Testis (tissue), 5 donors: ENCODE measurements at regions of chr13 and their contacts with region 1.

Region 1: GRCh38 chr13:26929971-26930730 is 169.6 kb upstream of the GPR12 start:
- DNase-seq: peak; percentile 83
- H3K4me3 ChIP-seq: peak overlapping the region in 1 of 2 donors; percentile 14
- H3K27ac ChIP-seq: no peak overlapping the region
- H3K4me1 ChIP-seq: no peaks in the 10 kb centered on the region
- H3K27me3 ChIP-seq: no peaks in the 10 kb centered on the region
- CTCF ChIP-seq: peak; percentile 69 to 98 (median 82)
- POLR2A ChIP-seq: no peak

Region 2: GRCh38 chr13:26707122-26708006 is 222.8 kb before region 1 on chr13:
- intact Hi-C with region 1: loop called (anchors 5 kb)
- DNase-seq: peak; percentile 73
- H3K4me3 ChIP-seq: no peak overlapping the region
- H3K27ac ChIP-seq: no peak overlapping the region
- H3K4me1 ChIP-seq: no peaks in the 10 kb centered on the region
- H3K27me3 ChIP-seq: no peaks in the 10 kb centered on the region
- CTCF ChIP-seq: peak; percentile 44 to 58 (median 53)
- POLR2A ChIP-seq: no peak